ENCODE measurements at regions of chr3 and their contacts with region 1.

Region 1: GRCh38 chr3:51670823-51671733 is at the start of gene TEX264:
- DNase-seq: peak; percentile 90
- H3K4me3 Mint-ChIP-seq: peak within 1 kb of the TSS; percentile 89
- H3K27ac Mint-ChIP-seq: peak within 1 kb of the TSS; percentile 86
- H3K4me1 Mint-ChIP-seq: peaks cover 45% of the 10 kb centered on the region
- H3K27me3 Mint-ChIP-seq: no peaks in the 10 kb centered on the region
- CTCF ChIP-seq: no peak
- total RNA-seq, gene TEX264: 41.3 and 46.4 TPM in 2 replicates

Region 2: GRCh38 chr3:51384726-51385473 is 286.2 kb before region 1 on chr3 and contains the start of gene MANF:
- CTCF ChIA-PET with region 1: interaction called, 7 read pairs
- POLR2A ChIA-PET with region 1: no interaction called
- intact Hi-C with region 1: loop called (anchors 5 kb)
- DNase-seq: peak; percentile 98
- H3K4me3 Mint-ChIP-seq: peak within 1 kb of the TSS; percentile 90
- H3K27ac Mint-ChIP-seq: peak within 1 kb of the TSS; percentile 98
- H3K4me1 Mint-ChIP-seq: peaks cover 26% of the 10 kb centered on the region
- H3K27me3 Mint-ChIP-seq: no peaks in the 10 kb centered on the region
- CTCF ChIP-seq: no peak
- total RNA-seq, gene MANF: 271 and 273 TPM in 2 replicates

Region 3: GRCh38 chr3:51538459-51539290 is 132.4 kb before region 1 on chr3 and contains the start of gene RAD54L2:
- CTCF ChIA-PET with region 1: interaction called, 34 read pairs
- POLR2A ChIA-PET with region 1: interaction called, 22 read pairs
- intact Hi-C with region 1: no loop called
- DNase-seq: peak; percentile 82
- H3K4me3 Mint-ChIP-seq: peak within 1 kb of the TSS; percentile 74
- H3K27ac Mint-ChIP-seq: peak within 1 kb of the TSS; percentile 65
- H3K4me1 Mint-ChIP-seq: peaks cover 17% of the 10 kb centered on the region
- H3K27me3 Mint-ChIP-seq: no peaks in the 10 kb centered on the region
- CTCF ChIP-seq: peak; percentile 22
- total RNA-seq, gene RAD54L2: 23.5 and 28.2 TPM in 2 replicates

Region 4: DNA sequence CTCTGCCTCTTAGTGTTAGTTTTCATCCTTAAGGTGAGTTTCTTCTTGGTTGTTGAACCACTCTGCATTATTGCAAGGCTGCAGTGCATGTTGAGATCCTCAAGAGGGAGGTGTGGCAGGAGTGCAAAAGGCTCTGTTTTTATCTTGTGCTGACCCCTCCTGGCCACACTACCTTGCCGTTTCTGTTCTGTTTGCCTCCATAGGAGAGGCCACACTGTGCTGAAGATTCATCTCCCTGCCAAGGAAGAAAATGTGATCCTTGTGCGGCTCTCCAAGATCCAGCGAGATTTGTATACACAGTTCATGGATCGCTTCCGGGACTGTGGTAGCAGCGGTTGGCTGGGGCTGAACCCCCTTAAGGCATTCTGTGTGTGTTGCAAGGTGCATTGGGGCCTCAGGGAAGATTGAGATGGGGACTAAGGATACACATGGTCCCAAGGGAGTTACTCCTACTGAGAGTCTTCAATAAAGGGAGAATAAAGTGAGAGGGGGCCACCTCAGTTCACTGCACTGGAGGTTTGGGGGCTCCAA is 33.1 kb before region 1 on chr3:
- CTCF ChIA-PET with region 1: interaction called, 87 read pairs
- POLR2A ChIA-PET with region 1: interaction called, 3 read pairs
- intact Hi-C with region 1: loop called (anchors 1 kb)
- DNase-seq: peak; percentile 72
- H3K4me3 Mint-ChIP-seq: no peak overlapping the region
- H3K27ac Mint-ChIP-seq: no peak overlapping the region
- H3K4me1 Mint-ChIP-seq: no peaks in the 10 kb centered on the region
- H3K27me3 Mint-ChIP-seq: no peaks in the 10 kb centered on the region
- CTCF ChIP-seq: peak; percentile 84

Region 5: DNA sequence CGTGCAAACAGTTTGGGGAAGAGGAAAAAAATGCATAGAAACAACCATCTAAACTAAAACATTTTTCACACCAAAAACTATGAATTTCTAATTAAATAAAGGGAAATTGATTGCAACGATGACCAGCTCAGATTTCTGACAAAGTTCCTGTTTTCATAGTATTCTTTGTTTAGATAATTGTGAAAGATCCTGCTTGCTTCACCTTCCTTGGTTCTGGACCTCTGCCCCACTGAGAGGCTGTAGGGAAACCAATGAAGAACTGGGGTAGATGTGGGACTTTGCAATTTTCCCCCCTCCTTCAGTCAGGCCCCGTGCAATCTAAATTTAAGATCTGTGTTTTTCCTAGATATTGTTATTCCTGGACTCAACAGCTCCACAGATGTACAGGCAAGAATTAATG is 13.8 kb before region 1 on chr3:
- CTCF ChIA-PET with region 1: interaction called, 50 read pairs
- POLR2A ChIA-PET with region 1: interaction called, 4 read pairs
- intact Hi-C with region 1: no loop called
- DNase-seq: no peak
- H3K4me3 Mint-ChIP-seq: no peak overlapping the region
- H3K27ac Mint-ChIP-seq: no peak overlapping the region
- H3K4me1 Mint-ChIP-seq: no peaks in the 10 kb centered on the region
- H3K27me3 Mint-ChIP-seq: no peaks in the 10 kb centered on the region
- CTCF ChIP-seq: no peak

Region 6: DNA sequence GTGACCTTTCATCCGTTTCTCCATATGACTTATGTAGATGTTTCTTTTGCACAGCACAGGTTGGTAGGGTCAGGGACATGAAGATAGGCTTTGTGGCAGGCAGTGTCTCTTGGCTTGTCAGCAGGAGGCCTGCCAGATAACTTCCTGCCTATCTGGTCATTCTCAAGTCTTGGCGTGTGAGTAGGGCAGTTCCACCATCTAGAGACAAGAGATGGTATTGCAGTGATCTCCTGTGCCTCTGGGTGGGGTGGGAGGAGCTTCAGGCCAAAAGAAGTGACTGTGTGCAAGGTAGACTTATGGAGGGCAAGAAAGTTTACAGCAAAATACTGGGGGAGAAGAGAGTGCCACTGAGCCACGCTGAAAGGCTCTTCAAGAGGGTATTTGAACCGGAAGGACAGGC is 11.0 kb after region 1 on chr3:
- CTCF ChIA-PET with region 1: interaction called, 64 read pairs
- POLR2A ChIA-PET with region 1: interaction called, 63 read pairs
- intact Hi-C with region 1: loop called (anchors 2 kb)
- DNase-seq: peak; percentile 91
- H3K4me3 Mint-ChIP-seq: no peak overlapping the region
- H3K27ac Mint-ChIP-seq: peak overlapping the region; percentile 35
- H3K4me1 Mint-ChIP-seq: peaks cover 42% of the 10 kb centered on the region
- H3K27me3 Mint-ChIP-seq: no peaks in the 10 kb centered on the region
- CTCF ChIP-seq: peak; percentile 65

Region 7: DNA sequence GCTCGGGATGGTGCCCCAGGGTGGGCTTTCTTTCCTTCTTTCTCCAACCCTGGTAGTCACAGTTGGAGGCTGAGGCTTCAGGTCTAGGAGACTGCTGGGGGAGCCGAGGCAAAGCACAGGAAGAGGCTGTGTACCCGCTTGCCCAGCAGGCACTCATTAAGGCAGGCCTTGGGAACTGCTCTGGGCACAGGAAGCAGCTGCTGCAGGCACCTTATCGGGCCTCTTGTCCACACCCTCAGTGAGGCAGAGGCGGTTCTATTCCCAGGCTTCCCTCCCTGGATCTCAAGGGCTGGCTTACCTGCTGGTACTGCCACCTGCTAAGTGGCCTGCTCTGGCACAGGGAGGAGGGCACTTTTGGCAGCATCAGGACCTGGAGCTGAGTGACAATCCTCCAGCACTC is 19.9 kb after region 1 on chr3:
- CTCF ChIA-PET with region 1: interaction called, 10 read pairs
- POLR2A ChIA-PET with region 1: interaction called, 4 read pairs
- intact Hi-C with region 1: no loop called
- DNase-seq: no peak
- H3K4me3 Mint-ChIP-seq: no peak overlapping the region
- H3K27ac Mint-ChIP-seq: no peak overlapping the region
- H3K4me1 Mint-ChIP-seq: peaks cover 12% of the 10 kb centered on the region
- H3K27me3 Mint-ChIP-seq: no peaks in the 10 kb centered on the region
- CTCF ChIP-seq: no peak

Measured in MCF 10A (cell line).